Activated CD4-positive, alpha-beta memory T cell treated with anti-CD3 and anti-CD28 coated beads for 36 hours (primary cell): ENCODE measurements at regions of chr6 and their contacts with region 1.

Region 1: GRCh38 chr6:56708810-56709597 is 66.3 kb upstream of the DST start:
- DNase-seq: no peak
- H3K4me3 Mint-ChIP-seq: no peak overlapping the region
- H3K27ac Mint-ChIP-seq: no peak overlapping the region
- H3K4me1 Mint-ChIP-seq: no peaks in the 10 kb centered on the region
- H3K27me3 Mint-ChIP-seq: no peaks in the 10 kb centered on the region

Region 2: GRCh38 chr6:56757588-56757984 is 48.6 kb after region 1 on chr6:
- CTCF ChIA-PET with region 1: interaction called, 4 read pairs
- POLR2A ChIA-PET with region 1: no interaction called
- intact Hi-C with region 1: loop called (anchors 5 kb)
- DNase-seq: no peak
- H3K4me3 Mint-ChIP-seq: no peak overlapping the region
- H3K27ac Mint-ChIP-seq: no peak overlapping the region
- H3K4me1 Mint-ChIP-seq: peaks cover 5% of the 10 kb centered on the region
- H3K27me3 Mint-ChIP-seq: no peaks in the 10 kb centered on the region

Region 3: DNA sequence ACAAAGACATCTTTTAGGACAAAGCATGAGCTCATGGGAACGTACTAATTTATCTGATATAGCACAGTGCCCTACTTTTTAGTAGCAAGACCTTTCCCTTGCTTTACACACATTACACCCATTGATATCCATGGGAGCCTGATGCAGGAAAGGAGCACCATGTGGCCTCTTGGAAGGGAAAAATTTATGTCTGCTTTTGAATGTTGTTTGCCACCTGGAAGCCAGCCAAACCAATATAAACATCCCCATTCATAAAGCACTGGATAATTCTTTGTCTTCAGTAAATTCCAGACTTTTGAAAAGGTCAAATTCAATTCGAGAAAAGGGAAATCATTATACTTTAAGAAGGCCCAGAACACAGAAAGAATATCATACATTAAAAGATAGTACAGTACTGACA is 93.6 kb after region 1 on chr6:
- CTCF ChIA-PET with region 1: no interaction called
- POLR2A ChIA-PET with region 1: no interaction called
- intact Hi-C with region 1: no loop called
- DNase-seq: no peak
- H3K4me3 Mint-ChIP-seq: no peak overlapping the region
- H3K27ac Mint-ChIP-seq: no peak overlapping the region
- H3K4me1 Mint-ChIP-seq: no peaks in the 10 kb centered on the region
- H3K27me3 Mint-ChIP-seq: peaks cover 2% of the 10 kb centered on the region

Region 4: GRCh38 chr6:56851541-56852259 is 142.7 kb after region 1 on chr6:
- CTCF ChIA-PET with region 1: interaction called, 13 read pairs
- POLR2A ChIA-PET with region 1: no interaction called
- intact Hi-C with region 1: loop called (anchors 1 kb)
- DNase-seq: peak; percentile 68
- H3K4me3 Mint-ChIP-seq: peak overlapping the region; percentile 56
- H3K27ac Mint-ChIP-seq: no peak overlapping the region
- H3K4me1 Mint-ChIP-seq: peaks cover 17% of the 10 kb centered on the region
- H3K27me3 Mint-ChIP-seq: peaks cover 39% of the 10 kb centered on the region